ENCODE measurements at regions of chr18 and their contacts with region 1.

Region 1: GRCh38 chr18:71850602-71851001 is 693.5 kb downstream of the CBLN2 start:
- DNase-seq: no peak
- H3K4me3 Mint-ChIP-seq: no peak overlapping the region
- H3K27ac Mint-ChIP-seq: no peak overlapping the region
- H3K4me1 Mint-ChIP-seq: no peaks in the 10 kb centered on the region
- H3K27me3 Mint-ChIP-seq: no peaks in the 10 kb centered on the region

Region 2: DNA sequence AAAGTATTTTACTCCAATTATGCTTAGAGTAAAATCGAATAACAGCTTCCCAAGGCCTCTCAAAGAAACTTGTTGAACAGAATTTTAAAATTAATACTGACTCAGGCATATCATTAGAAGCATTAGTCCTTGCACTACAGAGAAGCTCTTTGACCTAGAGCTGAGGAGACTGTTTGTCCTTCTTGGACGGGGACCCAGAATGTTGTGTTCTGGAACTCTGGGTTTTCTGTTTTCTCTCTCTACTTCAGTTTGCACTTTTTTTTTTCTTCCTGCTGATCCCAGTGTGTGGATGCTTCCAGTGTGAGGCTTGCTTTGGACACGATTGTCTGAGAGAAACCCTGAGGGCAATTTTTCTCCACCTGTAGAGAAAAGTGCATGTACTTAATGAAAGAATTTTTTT is 714.1 kb before region 1 on chr18:
- intact Hi-C with region 1: loop called (anchors 5 kb)
- DNase-seq: no peak
- H3K4me3 Mint-ChIP-seq: no peak overlapping the region
- H3K27ac Mint-ChIP-seq: no peak overlapping the region
- H3K4me1 Mint-ChIP-seq: no peaks in the 10 kb centered on the region
- H3K27me3 Mint-ChIP-seq: no peaks in the 10 kb centered on the region